ENCODE measurements at regions of chr3 and their contacts with region 1.

Region 1: DNA sequence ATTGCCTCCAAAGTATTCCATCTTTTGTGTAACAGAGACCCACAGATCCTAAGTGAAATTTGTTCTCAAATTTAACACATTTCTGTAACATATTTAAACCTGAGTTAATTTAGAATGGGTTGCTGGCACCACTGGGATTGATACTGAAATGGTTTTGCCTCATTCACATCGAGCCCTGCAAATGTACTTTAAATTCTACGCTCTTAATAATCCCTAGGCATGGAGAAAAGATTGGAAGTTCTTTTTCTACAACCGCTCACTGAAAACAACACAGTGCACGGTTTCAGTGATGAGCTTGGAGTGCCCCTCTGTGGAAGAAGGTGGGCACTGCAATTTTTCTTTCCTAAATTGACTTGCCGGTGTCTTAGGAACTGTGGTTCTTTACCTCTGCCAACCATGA is 109.9 kb upstream of the ATP11B start:
- DNase-seq: peak; percentile 73
- ATAC-seq: peak; percentile 71
- H3K4me3 Mint-ChIP-seq: peak overlapping the region; percentile 74
- H3K27ac Mint-ChIP-seq: no peak overlapping the region
- H3K4me1 Mint-ChIP-seq: peaks cover 12% of the 10 kb centered on the region
- H3K27me3 Mint-ChIP-seq: peaks cover 44% of the 10 kb centered on the region

Region 2: DNA sequence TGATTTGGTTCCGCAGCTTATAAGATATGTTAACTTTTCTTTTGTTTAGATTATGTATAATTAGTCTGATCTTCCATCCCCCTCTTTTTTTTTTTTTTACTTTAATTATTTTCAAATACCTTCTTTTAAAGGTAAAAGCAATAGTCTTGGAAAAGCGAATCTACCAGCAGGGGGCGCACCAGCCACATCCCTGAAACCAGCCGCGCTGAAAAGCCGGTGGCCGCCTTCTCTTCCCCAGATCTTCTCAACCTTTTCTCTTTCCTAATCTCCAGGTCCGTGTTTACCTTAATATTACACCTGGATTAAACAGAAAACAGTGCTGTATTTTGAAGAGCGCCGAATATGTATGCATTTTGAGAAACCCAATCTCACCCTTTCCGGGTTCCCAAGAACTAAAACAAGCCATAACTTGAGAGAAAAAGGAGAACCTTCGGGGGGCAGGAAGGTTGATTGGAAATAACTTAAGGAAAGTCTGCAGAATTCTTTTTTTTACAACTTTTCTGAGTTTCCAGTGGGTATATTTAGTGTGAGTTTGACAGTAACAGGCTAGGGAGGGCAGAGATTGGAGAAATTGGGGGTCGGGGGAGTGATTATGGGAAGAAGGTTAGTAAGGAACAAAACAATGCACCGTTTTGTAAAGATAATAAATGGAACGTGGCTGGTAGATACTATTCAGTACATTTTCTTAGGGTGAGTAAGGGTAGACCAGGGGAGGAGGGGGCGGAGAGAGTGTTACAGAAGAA is 973.7 kb before region 1 on chr3:
- CTCF ChIA-PET with region 1: interaction called, 28 read pairs
- POLR2A ChIA-PET with region 1: no interaction called
- DNase-seq: peak; percentile 75
- ATAC-seq: no peak
- H3K4me3 Mint-ChIP-seq: peak overlapping the region; percentile 42
- H3K27ac Mint-ChIP-seq: no peak overlapping the region
- H3K4me1 Mint-ChIP-seq: peaks cover 8% of the 10 kb centered on the region
- H3K27me3 Mint-ChIP-seq: peaks cover 57% of the 10 kb centered on the region

Region 3: DNA sequence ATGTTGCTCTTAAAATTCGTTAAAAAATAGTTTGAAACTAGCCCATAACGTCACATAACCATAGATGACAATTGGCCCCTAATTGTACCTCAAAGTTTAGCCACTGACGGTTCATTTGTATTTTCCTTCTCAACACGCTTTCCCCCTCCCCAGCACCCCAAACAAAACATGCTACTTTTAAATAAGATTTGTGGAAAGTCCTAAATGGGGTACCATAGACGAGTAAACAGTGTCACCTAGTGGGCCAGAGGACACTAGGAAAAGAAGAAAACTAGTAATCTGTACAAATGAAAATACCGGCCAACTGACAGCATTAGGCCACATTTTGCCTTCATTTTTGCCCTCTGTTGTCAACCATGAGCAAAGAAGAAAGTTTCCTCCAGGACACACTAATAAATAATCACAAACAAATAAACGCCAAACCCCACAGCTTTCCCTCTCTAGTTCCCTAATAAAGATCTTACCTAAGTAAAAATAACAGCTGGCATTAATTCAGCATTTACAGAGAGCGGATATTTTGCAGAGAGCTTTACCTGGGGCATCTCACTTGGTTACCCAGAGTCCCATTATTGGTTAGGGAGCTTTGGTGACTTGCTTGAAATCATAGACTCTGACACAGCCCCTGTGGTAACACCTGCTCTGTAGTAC is 65.2 kb before region 1 on chr3:
- CTCF ChIA-PET with region 1: no interaction called
- POLR2A ChIA-PET with region 1: no interaction called
- DNase-seq: no peak
- ATAC-seq: no peak
- H3K4me3 Mint-ChIP-seq: no peak overlapping the region
- H3K27ac Mint-ChIP-seq: no peak overlapping the region
- H3K4me1 Mint-ChIP-seq: no peaks in the 10 kb centered on the region
- H3K27me3 Mint-ChIP-seq: peaks cover 8% of the 10 kb centered on the region

Region 4: DNA sequence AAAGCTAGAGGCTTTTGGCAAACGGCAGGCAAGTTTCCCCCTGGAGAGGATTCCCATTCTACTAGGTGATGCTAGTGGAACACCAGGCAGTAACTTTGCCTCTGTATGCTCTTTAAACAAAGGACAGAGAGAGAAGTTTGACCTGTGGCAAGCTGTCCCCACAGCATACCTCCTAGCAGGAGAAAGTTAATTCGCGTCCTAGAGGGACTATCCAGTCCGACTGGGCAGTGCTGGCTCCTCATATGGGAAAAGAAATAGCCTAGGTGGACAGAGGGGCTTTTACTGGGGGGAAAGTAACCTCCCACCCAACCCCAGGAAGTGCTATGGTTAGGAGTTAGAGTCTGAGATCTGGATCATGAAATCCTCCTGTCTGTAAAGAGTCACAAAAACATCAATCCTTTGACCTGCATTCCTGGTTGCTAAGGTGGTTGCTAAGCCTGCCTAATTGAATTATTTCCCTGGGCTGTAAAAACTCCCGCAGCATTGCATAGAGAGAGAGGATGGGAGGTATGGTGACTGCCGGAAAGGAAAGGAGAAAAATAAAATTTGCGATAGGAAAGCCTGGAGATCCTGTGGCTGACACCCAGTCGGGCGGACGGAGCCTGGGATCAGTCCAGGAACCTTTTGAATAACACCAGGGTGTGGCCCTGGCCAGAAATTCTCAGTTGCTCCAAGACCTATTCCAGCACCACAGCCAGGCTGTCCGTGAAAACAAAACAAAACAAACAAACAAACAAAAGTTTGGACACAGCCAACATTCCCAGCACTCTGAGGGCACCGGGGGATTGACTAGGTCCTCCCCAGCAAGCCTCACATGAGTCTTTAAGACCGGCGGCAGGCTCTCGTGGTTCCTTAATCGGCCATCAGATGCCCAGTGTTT is 42.2 kb after region 1 on chr3:
- CTCF ChIA-PET with region 1: no interaction called
- POLR2A ChIA-PET with region 1: no interaction called
- DNase-seq: no peak
- ATAC-seq: no peak
- H3K4me3 Mint-ChIP-seq: no peak overlapping the region
- H3K27ac Mint-ChIP-seq: no peak overlapping the region
- H3K4me1 Mint-ChIP-seq: peaks cover 10% of the 10 kb centered on the region
- H3K27me3 Mint-ChIP-seq: peaks cover 3% of the 10 kb centered on the region